H1 (cell line): ENCODE measurements at regions of chr20 and their contacts with region 1.

Region 1: DNA sequence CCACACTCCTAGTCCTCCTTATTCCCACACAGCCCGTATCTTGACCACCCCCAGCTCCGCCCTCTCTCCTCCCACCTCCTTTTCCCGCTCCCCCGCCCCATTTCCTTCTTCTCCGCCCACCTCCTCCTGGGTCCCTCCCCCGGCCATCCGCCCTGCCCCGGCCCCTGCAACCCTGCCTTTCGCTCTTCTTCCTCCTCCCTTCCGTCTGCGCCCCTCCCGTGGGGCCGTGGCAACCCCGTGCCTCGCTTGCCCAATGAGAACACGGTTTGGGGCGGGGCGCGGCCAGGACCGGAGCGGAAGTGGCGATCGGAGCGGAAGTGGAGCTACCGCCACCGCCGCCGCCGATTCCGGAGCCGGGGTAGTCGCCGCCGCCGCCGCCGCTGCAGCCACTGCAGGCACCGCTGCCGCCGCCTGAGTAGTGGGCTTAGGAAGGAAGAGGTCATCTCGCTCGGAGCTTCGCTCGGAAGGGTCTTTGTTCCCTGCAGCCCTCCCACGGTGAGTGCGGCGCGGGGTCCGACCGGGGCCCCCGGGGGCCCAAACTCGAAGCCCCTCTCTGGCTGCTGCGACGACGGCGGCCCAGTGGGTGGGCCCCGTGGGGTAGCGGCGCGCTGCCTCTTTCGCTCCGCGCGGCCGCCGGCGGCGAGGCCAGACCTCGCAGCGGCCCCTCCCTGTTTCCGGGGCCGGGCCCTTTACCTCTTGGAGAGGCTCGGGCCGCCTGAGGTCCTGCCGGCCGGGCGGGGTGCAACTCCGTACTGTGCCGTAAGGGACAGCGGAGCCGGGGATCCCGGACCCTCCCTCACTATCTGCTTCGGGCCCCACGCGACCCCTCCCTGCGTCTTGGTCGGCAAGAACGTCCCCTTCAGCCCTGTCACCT is at the start of gene YWHAB:
- DNase-seq: peak; percentile 95 to 98
- H3K4me3 ChIP-seq: peak within 1 kb of the TSS; percentile 86 to 96 (median 92)
- H3K27ac ChIP-seq: peak within 1 kb of the TSS; percentile 72; the same call in 1 of the 2 replicates
- H3K4me1 ChIP-seq: peaks cover 0 to 9% (median 7%) of the 10 kb centered on the region in 4 experiments; a peak in 5 of 7 replicates
- H3K27me3 ChIP-seq: no peaks in the 10 kb centered on the region
- CTCF ChIP-seq: peak in 1 of 3 experiments; percentile 13; a peak in 1 of 4 replicates
- EP300 ChIP-seq: peak in 1 of 2 experiments; percentile 3; a peak in 1 of 3 replicates
- POLR2A ChIP-seq: 0 out of 3 replicates have a peak, but pooled peaks of 1 of the 2 experiments have one; percentile 70
- RAD21 ChIP-seq: no peak
- total RNA-seq, gene YWHAB: 246 and 256 TPM in 2 replicates

Region 2: DNA sequence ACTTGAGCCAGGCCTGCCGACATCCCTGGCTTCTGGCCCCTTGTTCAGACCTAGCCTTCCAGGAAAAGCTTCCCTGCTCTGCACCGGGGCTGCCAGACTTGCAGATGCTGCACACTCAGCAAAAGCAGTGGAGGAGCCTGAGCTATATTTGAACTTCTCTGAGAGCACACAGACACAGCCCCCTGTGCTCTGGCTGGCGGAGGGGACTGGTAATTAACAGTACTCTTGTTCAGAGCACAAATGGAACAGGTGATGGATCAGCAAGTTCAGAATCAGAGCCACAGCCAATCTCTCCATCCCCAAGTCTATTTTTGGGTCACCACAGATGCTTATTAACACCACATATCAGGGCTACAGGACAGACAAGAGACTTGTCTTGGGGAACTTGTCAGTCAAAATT is 47.7 kb before region 1 on chr20:
- CTCF ChIA-PET with region 1: no interaction called
- POLR2A ChIA-PET with region 1: no interaction called
- DNase-seq: no peak
- H3K4me3 ChIP-seq: no peak overlapping the region
- H3K27ac ChIP-seq: no peak overlapping the region
- H3K4me1 ChIP-seq: peaks cover 0 to 3% (median 2%) of the 10 kb centered on the region in 4 experiments; a peak in 3 of 7 replicates
- H3K27me3 ChIP-seq: no peaks in the 10 kb centered on the region; a peak in 1 of 7 replicates
- CTCF ChIP-seq: no peak
- EP300 ChIP-seq: no peak
- POLR2A ChIP-seq: no peak
- RAD21 ChIP-seq: no peak

Region 3: DNA sequence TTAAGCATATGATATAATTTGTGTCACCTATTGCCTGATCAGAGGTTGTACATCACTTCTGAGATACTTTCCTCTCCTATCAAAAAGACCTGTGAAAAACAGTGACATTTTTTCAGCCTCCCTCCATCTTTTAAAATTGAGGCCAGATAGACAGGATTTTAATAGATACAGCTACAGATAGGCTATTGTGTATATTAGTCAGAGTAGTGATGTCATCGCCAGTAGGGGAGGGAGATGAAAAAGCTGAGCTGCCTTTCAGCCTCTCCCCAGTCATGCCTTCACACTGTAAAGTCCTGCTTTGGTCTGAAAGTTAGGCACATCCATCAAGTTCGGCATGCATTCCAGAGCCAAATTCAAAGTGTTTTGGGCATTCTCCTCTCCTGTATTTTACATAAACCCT is 16.3 kb after region 1 on chr20:
- CTCF ChIA-PET with region 1: interaction called, 3 read pairs
- POLR2A ChIA-PET with region 1: interaction called, 30 read pairs
- DNase-seq: no peak
- H3K4me3 ChIP-seq: no peak overlapping the region
- H3K27ac ChIP-seq: no peak overlapping the region
- H3K4me1 ChIP-seq: no peaks in the 10 kb centered on the region
- H3K27me3 ChIP-seq: no peaks in the 10 kb centered on the region
- CTCF ChIP-seq: no peak
- EP300 ChIP-seq: no peak
- POLR2A ChIP-seq: no peak
- RAD21 ChIP-seq: no peak